KBM-7 (cell line): ENCODE measurements at regions of chr1 and their contacts with region 1.

Region 1: DNA sequence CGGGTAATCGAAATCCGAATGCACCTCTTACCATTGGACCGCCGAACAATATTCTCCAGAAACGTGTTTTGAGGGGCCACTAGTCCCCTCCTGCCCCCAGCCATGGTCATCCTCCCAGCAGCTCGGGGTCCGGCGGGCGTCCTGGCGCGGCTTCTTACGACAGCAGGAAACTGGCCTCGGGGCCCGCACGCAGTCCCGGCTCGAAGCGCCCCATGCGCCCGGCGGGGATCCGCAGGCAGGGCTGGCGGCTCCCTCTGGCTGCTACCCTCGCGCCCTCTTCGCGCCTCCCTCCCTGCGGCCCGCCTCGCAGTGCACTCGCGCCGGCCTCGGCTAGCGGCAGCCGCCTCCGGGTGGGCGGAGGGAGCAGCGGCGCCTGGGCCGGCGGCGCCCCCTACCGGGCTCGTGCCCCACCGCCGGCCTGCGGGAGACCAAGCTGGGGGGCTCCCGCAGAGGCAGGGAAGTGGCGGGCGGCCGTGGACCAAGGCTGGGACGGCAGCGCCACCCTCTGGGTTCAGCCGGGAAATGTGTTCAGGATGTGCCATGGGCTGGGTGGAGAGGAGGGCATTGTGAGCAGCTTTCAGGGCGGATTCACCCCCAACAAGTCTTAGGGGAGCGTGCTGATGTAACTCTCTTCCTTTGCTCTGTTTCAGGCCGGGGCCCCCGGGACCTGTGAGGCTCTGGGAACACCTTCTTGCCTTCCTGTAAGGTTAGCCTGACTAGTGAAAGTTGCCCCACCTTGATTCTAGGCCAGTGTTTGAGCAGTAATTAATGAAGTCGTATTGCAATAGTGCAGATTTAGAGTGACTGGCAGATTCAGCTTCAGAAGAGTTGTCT is at the start of gene KCNH1:
- DNase-seq: peak; percentile 92

Region 2: DNA sequence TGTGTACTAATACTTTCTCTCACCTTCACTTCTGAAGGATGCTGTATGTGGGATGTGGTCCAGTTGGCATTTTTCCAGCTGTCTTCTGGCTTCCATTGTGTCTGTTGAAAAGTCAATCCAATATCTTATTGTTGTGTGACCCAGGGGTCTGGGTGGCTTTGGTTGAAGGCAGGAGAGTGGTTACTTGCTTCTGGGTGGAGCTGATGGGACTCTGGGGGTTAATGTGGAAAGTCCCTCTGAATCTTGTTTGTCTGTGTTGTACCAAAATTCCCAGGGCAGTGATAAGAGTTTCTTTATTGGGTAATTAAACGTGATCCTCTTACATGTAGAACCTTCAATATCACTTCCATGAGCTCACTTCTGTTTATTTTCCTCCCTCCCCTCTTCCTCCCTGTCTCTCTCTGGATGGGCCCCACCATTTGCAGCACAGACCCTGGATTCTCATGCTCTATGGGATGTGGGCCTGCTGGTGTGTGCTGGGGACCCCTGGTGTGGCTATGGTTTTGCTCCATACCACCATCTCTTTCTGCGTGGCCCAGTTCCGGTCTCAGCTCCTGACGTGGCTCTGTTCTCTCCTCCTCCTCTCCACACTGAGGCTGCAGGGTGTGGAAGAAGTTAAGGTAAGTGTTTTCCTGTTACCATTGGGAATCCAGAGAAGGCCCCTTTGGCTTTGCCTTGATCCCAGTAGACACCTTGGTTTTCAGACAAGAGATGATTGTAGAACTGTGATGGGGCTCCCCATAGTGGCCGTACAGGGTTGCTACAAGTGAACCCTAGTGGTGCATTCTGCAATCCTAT is 733.8 kb before region 1 on chr1:
- in situ Hi-C with region 1: loop called (anchors 25 kb)
- DNase-seq: peak; percentile 50

Region 3: GRCh38 chr1:210841926-210842625 is 292.0 kb before region 1 on chr1:
- in situ Hi-C with region 1: no loop called
- DNase-seq: no peak

Region 4: DNA sequence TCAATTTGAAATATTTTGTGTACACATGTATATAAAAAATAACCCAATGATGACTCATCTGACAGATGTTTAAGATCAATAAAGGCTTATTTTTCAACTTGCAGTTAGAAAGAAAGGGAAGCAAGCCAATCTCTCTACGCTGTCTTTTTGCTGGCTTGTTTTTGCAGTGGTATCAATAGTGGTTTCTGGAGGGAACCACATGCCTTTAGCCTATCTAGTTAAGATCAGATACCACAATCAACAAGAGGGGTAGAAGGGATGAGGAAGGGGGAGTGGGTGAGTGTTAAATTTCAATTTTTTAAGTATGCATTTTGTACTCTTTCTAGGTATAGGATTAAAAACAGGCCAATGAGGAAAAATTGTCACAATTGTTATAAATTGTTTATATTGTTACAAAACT is 276.3 kb before region 1 on chr1:
- in situ Hi-C with region 1: no loop called
- DNase-seq: no peak

Region 5: GRCh38 chr1:211009944-211010343 is 124.1 kb before region 1 on chr1:
- in situ Hi-C with region 1: no loop called
- DNase-seq: no peak